Heart left ventricle (tissue), 16 donors: ENCODE measurements at regions of chr4 and their contacts with region 1.

Region 1: GRCh38 chr4:168585168-168586091 is 88.6 kb downstream of the PALLD start:
- DNase-seq: peak; percentile 80 to 88 (median 83)
- ATAC-seq: peak; percentile 85 to 92 (median 87)
- H3K4me3 ChIP-seq: no peak overlapping the region
- H3K27ac ChIP-seq: peak overlapping the region in 5 of 12 donors; percentile 16 to 64 (median 52)
- H3K4me1 ChIP-seq: peaks cover 0 to 49% (median 37%) of the 10 kb centered on the region in 12 donors
- H3K27me3 ChIP-seq: no peaks in the 10 kb centered on the region
- CTCF ChIP-seq: peak; percentile 57 to 83 (median 78)
- POLR2A ChIP-seq: no peak

Region 2: DNA sequence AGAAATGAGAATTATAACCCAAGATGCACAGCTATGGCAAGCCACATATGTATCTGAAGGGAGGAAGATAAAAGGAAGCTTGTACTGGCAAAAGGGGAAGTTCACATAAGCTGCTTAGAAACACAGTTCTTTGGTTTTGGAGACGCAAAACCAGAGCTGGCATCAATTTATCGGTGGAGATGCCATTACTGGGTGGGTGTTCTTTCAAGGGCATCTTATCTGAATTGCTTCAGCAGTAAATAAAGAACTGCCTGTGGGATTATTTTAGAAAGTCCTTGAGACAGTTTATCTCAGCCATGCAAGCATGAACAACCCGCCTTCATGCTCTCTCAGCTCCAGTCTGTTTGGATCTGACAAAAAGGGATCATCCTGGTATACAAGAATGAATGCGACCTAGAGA is 327.7 kb before region 1 on chr4:
- intact Hi-C with region 1: no loop called
- DNase-seq: peak in 1 of 5 donors; percentile 24
- ATAC-seq: peak; percentile 72 to 93 (median 86)
- H3K4me3 ChIP-seq: no peak overlapping the region
- H3K27ac ChIP-seq: peak overlapping the region in 11 of 12 donors; percentile 11 to 88 (median 68)
- H3K4me1 ChIP-seq: peaks cover 0 to 26% (median 4%) of the 10 kb centered on the region in 12 donors
- H3K27me3 ChIP-seq: no peaks in the 10 kb centered on the region
- CTCF ChIP-seq: no peak
- POLR2A ChIP-seq: no peak

Region 3: GRCh38 chr4:168631241-168632162 is 46.1 kb after region 1 on chr4:
- intact Hi-C with region 1: loop called in 6 of 10 experiments (anchors 2 to 5 kb)
- DNase-seq: peak; percentile 57 to 80 (median 71)
- ATAC-seq: peak; percentile 59 to 86 (median 84)
- H3K4me3 ChIP-seq: peak overlapping the region; percentile 28 to 75 (median 58)
- H3K27ac ChIP-seq: peak overlapping the region; percentile 22 to 87 (median 76)
- H3K4me1 ChIP-seq: peaks cover 0 to 54% (median 34%) of the 10 kb centered on the region in 12 donors
- H3K27me3 ChIP-seq: peaks cover 0 to 30% (median 0%) of the 10 kb centered on the region in 9 donors
- CTCF ChIP-seq: peak in 10 of 12 donors; percentile 27 to 68 (median 39)
- POLR2A ChIP-seq: no peak

Region 4: DNA sequence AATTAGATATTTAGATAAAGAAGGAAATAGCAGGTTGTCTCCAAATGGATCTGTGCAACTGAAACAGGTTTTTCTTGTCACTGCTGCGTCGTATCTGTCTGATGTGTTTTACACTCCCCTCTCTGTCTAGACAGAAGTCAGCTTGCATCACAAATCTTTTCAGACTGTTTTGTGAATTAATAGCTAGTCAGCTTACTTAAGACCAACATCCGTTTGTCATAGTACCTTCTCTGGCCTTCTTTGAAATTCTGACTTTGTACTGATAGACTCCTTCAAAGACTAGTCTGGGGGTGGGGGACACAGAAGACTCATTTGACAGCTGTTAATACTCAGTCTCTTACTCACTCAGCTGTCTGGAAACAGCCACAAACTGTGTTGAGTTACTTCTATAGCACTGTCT is 109.2 kb after region 1 on chr4:
- intact Hi-C with region 1: loop called in 7 of 10 experiments (anchors 5 to 10 kb)
- DNase-seq: no peak
- ATAC-seq: peak; percentile 45 to 90 (median 58)
- H3K4me3 ChIP-seq: no peak overlapping the region
- H3K27ac ChIP-seq: peak overlapping the region in 8 of 12 donors; percentile 23 to 66 (median 38)
- H3K4me1 ChIP-seq: peaks cover 0 to 23% (median 2%) of the 10 kb centered on the region in 12 donors
- H3K27me3 ChIP-seq: no peaks in the 10 kb centered on the region
- CTCF ChIP-seq: no peak
- POLR2A ChIP-seq: no peak

Region 5: DNA sequence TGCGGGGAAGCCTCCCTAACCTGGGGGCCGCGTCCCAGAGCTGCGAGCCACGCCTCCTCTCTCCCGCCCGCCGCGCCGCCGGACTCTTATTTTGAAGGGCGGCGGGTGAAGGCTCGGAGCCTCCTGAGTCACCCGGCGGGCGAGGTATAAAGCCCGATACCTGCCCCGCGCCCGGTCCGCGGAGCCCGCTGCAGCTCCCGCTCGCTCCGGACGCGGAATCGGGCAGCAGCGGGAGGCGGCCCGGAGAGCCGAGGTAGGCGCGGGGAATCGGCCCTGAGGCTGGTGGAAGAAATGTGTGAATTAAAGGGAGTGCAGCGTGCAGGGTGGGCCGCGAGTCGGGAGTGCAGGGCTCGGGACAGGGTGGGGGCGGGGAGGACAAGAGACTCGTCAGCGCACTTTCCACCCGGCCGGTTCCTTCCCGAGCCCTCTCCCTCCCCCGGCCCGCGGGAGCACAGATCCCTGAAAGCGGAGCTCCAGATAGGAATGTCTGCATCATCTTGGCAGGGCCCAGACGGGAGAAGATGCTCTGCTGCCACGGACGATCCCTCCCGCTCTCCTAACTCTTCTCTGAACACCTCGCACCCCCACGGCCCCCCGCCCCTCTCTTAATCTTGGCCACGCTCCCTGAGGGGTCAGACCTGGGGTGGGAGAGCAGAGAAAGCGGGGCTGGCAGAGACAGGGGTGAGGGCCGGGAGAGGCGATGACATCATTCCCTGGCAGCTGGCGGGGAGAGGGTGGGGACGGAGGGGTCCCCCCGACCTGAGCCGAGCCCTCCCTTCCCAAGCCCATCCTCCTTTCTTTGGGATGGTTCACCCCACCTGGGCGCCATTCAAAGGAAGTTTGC is 246.7 kb after region 1 on chr4:
- intact Hi-C with region 1: loop called in 1 of 10 experiments (anchors 10 kb)
- DNase-seq: peak; percentile 78 to 90 (median 87)
- ATAC-seq: peak; percentile 56 to 89 (median 86)
- H3K4me3 ChIP-seq: peak overlapping the region; percentile 61 to 95 (median 74)
- H3K27ac ChIP-seq: peak overlapping the region; percentile 80 to 97 (median 87)
- H3K4me1 ChIP-seq: peaks cover 0 to 54% (median 38%) of the 10 kb centered on the region in 12 donors
- H3K27me3 ChIP-seq: peaks cover 0 to 16% (median 0%) of the 10 kb centered on the region in 9 donors
- CTCF ChIP-seq: peak in 1 of 12 donors; percentile 13
- POLR2A ChIP-seq: peak; percentile 50 to 97